Caco-2 (cell line): ENCODE measurements at regions of chr5 and their contacts with region 1.

Region 1: DNA sequence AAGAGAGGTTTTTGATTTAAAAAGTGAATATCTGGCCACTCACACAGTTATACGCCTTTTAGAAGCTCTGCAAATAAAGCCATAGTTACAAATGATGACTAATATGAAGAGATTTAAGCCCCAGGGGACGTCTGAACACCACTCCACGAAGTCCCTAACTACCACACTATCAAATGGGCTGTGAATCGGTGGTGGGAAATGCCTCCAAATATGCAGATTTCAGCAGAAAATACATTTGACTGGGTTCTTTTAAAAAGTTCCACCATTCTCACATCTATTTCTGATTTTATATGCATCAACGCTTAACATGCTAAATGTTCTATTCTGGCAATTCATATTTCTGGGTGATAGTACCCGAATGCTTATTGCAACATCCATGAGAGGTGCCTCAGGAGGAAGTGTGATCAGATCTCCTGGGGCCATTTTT is 22.5 kb downstream of the TICAM2 start:
- DNase-seq: no peak
- H3K4me3 ChIP-seq: no peak overlapping the region
- H3K4me3 Mint-ChIP-seq: no peak overlapping the region
- H3K27ac Mint-ChIP-seq: no peak overlapping the region
- H3K4me1 ChIP-seq: no peaks in the 10 kb centered on the region
- H3K4me1 Mint-ChIP-seq: no peaks in the 10 kb centered on the region
- H3K27me3 ChIP-seq: no peaks in the 10 kb centered on the region
- H3K27me3 Mint-ChIP-seq: no peaks in the 10 kb centered on the region
- CTCF ChIP-seq: no peak

Region 2: DNA sequence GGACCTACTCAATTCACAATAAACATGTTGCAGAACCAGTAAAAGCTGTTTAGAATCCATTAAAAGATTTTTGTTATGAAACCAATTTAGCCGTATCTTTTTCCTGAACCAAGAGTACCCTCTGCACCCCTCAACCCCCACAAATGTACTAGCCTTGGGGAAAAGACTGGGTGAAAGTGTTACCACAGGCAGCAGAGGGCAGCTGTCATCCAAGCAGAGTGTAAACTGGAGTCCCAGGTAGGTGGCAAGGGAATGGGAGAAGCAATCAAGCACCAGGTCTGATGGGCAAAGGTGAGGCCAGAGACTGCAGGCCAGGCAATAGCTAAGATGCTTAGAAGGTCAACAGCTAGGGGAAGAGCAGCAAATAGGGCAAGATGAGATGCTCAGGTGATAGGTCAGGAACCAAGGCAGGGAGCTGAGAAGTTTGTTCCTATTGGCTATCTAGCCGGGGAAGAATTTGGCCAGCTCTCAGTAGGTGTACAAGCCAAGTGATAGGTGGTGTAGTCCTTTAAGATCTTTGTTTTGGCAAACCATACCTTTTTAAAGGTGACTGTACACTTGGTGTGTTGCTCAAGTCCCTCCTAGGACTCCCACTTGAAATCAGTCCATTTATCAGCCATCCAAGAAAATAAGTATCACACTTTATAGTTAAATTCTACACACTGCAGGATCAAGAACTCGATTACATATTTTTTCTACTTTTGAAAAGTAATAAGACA is 205.5 kb before region 1 on chr5:
- CTCF ChIA-PET with region 1: interaction called, 5 read pairs
- POLR2A ChIA-PET with region 1: no interaction called
- intact Hi-C with region 1: loop called (anchors 1 kb)
- DNase-seq: no peak
- H3K4me3 ChIP-seq: no peak overlapping the region
- H3K4me3 Mint-ChIP-seq: no peak overlapping the region
- H3K27ac Mint-ChIP-seq: no peak overlapping the region
- H3K4me1 ChIP-seq: no peaks in the 10 kb centered on the region
- H3K4me1 Mint-ChIP-seq: no peaks in the 10 kb centered on the region
- H3K27me3 ChIP-seq: no peaks in the 10 kb centered on the region
- H3K27me3 Mint-ChIP-seq: peaks cover 5% of the 10 kb centered on the region
- CTCF ChIP-seq: peak in 1 of 2 experiments; percentile 22